ENCODE measurements at regions of chr2 and their contacts with region 1.

Region 1: GRCh38 chr2:165874445-165875039 is 79.0 kb downstream of the TTC21B start:
- DNase-seq: no peak
- H3K4me3 Mint-ChIP-seq: no peak overlapping the region
- H3K27ac Mint-ChIP-seq: no peak overlapping the region
- H3K4me1 Mint-ChIP-seq: peaks cover 25% of the 10 kb centered on the region
- H3K27me3 Mint-ChIP-seq: no peaks in the 10 kb centered on the region

Region 2: DNA sequence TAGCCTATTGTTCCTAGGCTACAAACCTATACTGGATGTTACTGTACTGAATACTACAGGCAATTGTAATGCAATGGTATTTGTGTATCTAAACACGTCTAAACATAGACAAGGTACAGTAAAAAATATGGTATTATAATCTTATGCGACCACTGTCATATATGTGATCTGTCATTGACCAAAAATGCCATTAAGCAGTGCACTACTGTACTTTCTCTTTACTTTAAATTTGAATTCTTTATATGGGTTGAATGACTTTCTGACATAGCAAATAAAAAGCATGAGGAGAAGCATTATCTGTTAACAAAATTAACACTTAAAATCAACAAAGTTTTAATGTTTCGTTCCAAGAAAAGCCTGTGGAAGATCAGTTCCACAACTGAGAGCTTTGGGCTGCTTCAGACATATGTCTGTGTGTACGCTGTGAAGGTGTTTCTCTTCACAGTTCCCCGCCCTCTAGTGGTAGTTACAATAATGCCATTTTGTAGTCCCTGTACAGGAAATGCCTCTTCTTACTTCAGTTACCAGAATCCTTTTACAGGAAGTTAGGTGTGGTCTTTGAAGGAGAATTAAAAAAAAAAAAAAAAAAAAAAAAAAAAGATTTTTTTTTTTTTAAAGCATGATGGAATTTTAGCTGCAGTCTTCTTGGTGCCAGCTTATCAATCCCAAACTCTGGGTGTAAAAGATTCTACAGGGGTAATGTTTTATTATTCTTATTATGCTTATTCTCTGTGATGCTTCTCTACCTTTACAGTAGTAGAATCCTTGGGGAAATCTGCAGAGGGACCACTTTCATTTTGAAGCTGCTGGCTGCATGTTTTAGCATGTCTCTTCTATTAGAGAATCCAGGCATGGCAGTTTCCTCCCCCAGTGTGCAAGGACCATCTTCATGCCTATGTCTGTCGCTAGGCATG is 580.8 kb before region 1 on chr2:
- CTCF ChIA-PET with region 1: interaction called, 6 read pairs
- POLR2A ChIA-PET with region 1: no interaction called
- intact Hi-C with region 1: loop called (anchors 10 kb)
- DNase-seq: no peak
- H3K4me3 Mint-ChIP-seq: no peak overlapping the region
- H3K27ac Mint-ChIP-seq: no peak overlapping the region
- H3K4me1 Mint-ChIP-seq: peaks cover 2% of the 10 kb centered on the region
- H3K27me3 Mint-ChIP-seq: peaks cover 4% of the 10 kb centered on the region

Region 3: GRCh38 chr2:165417009-165417408 is 457.5 kb before region 1 on chr2:
- CTCF ChIA-PET with region 1: interaction called, 10 read pairs
- POLR2A ChIA-PET with region 1: no interaction called
- intact Hi-C with region 1: no loop called
- DNase-seq: no peak
- H3K4me3 Mint-ChIP-seq: no peak overlapping the region
- H3K27ac Mint-ChIP-seq: no peak overlapping the region
- H3K4me1 Mint-ChIP-seq: no peaks in the 10 kb centered on the region
- H3K27me3 Mint-ChIP-seq: peaks cover 1% of the 10 kb centered on the region

Region 4: DNA sequence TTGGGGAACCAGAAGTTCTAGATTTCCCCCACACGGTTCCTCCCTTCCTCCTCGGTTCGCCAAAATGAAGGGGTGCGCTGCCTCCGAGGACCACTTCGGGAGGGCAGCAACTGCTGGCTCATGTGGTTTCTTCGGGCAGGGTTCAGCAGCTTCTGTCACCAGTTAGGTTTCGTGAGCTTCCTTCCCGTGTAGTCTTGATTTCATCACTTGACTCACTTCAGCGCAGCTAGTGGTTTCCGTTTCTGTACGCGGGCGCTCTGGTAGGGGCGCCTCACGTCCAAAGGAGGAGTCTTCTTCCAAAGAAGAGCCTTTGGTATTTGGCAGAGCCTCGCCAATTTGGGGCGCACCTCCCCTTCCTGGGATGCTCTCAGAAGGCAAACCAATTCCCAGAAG is 80.0 kb before region 1 on chr2:
- CTCF ChIA-PET with region 1: interaction called, 7 read pairs
- POLR2A ChIA-PET with region 1: no interaction called
- intact Hi-C with region 1: loop called (anchors 1 kb)
- DNase-seq: peak; percentile 79
- H3K4me3 Mint-ChIP-seq: peak overlapping the region; percentile 84
- H3K27ac Mint-ChIP-seq: peak overlapping the region; percentile 71
- H3K4me1 Mint-ChIP-seq: peaks cover 16% of the 10 kb centered on the region
- H3K27me3 Mint-ChIP-seq: peaks cover 22% of the 10 kb centered on the region

Region 5: GRCh38 chr2:165953655-165954606 is 79.4 kb after region 1 on chr2 and contains the start of gene TTC21B:
- CTCF ChIA-PET with region 1: interaction called, 4 read pairs
- POLR2A ChIA-PET with region 1: no interaction called
- intact Hi-C with region 1: loop called (anchors 1 kb)
- DNase-seq: peak; percentile 95
- H3K4me3 Mint-ChIP-seq: peak within 1 kb of the TSS; percentile 28
- H3K27ac Mint-ChIP-seq: no peak within 1 kb of the TSS
- H3K4me1 Mint-ChIP-seq: peaks cover 18% of the 10 kb centered on the region
- H3K27me3 Mint-ChIP-seq: no peaks in the 10 kb centered on the region
- total RNA-seq, gene TTC21B: 20.0 to 21.3 TPM

Measured in activated CD4-positive, alpha-beta memory T cell treated with anti-CD3 and anti-CD28 coated beads for 36 hours (primary cell).